ENCODE measurements at regions of chr6 and their contacts with region 1.

Region 1: GRCh38 chr6:30541515-30542403 is 14.5 kb downstream of the GNL1 start:
- DNase-seq: peak; percentile 90
- ATAC-seq: peak; percentile 76
- H3K4me3 Mint-ChIP-seq: peak overlapping the region; percentile 59
- H3K27ac Mint-ChIP-seq: peak overlapping the region; percentile 79
- H3K4me1 Mint-ChIP-seq: peaks cover 40% of the 10 kb centered on the region
- H3K27me3 Mint-ChIP-seq: no peaks in the 10 kb centered on the region

Region 2: GRCh38 chr6:30394139-30394538 is 147.6 kb before region 1 on chr6:
- CTCF ChIA-PET with region 1: no interaction called
- POLR2A ChIA-PET with region 1: no interaction called
- intact Hi-C with region 1: no loop called
- DNase-seq: no peak
- ATAC-seq: no peak
- H3K4me3 Mint-ChIP-seq: no peak overlapping the region
- H3K27ac Mint-ChIP-seq: no peak overlapping the region
- H3K4me1 Mint-ChIP-seq: no peaks in the 10 kb centered on the region
- H3K27me3 Mint-ChIP-seq: peaks cover 48% of the 10 kb centered on the region

Region 3: DNA sequence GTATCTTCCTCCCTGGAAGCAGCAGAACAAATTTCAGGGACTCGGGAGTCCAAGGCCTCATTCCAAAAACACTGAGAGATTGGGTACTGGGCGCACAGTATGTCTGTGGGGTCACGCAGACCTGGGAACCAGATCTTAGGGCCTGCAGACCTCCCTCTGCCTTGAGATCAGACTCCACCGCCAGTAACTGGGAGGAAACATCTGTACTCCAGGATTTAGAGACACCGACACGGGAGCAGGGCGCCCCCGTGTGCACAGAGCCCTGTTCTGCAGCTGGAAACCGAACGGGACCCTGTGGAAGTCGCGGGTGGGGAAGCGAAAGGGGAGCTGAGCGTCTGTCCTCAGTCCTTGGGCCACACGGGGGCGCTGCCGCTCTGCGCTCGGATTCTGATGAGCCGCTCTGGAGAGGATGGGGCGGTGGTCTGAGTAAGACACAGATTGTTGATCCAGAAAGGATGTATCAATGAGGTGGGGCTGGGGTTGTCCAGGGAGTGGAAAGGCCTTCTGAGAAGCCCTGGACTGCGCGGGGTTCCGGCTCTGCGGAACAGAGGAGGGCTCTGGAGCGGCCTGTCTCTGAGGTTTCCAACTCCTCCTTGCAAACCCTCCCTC is 88.1 kb before region 1 on chr6:
- CTCF ChIA-PET with region 1: interaction called, 19 read pairs
- POLR2A ChIA-PET with region 1: no interaction called
- intact Hi-C with region 1: no loop called
- DNase-seq: peak; percentile 93
- ATAC-seq: peak; percentile 85
- H3K4me3 Mint-ChIP-seq: peak overlapping the region; percentile 55
- H3K27ac Mint-ChIP-seq: no peak overlapping the region
- H3K4me1 Mint-ChIP-seq: peaks cover 37% of the 10 kb centered on the region
- H3K27me3 Mint-ChIP-seq: peaks cover 83% of the 10 kb centered on the region

Region 4: GRCh38 chr6:30483677-30484279 is 58.0 kb before region 1 on chr6:
- CTCF ChIA-PET with region 1: interaction called, 386 read pairs
- POLR2A ChIA-PET with region 1: interaction called, 8 read pairs
- intact Hi-C with region 1: loop called (anchors 1 kb)
- DNase-seq: no peak
- ATAC-seq: no peak
- H3K4me3 Mint-ChIP-seq: no peak overlapping the region
- H3K27ac Mint-ChIP-seq: no peak overlapping the region
- H3K4me1 Mint-ChIP-seq: peaks cover 39% of the 10 kb centered on the region
- H3K27me3 Mint-ChIP-seq: peaks cover 28% of the 10 kb centered on the region

Region 5: DNA sequence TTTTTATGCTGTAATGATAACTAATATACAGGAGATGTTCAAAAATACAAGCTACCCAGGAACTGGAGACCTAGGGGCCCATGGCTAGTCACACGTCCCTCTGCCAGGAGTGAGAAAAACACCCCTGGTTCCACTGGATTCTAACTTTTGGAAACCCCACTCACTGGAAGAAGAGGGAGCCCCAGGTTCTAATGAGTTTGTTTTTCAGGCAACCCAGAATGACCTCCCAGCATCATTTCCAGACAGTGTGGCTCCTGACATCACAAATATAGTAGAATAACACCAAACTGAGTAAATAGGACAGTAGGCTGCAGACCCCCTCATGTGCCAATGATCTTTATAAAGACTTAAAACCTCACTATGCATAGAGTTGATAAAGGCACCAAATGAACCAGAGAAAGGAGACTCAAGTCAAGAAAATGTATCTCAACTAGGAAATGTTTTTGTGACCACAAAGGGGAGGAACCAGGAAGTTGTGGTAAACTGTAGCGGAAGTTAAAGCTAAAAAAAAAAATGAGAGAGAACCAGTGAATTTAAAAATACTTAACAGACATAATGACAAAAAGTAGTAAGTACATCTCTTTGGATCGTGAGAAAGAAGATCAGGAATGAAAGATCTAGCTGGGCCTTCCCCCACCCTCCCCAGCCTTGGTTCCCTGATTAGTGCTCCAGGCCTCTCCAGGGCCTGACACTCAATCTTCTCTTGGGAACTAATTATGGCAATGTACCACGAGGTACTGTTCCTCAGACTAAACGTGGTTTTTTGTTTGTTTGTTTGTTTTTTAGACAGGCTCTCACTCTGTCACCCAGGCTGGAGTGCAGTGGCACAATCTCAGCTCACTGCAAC is 32.6 kb before region 1 on chr6:
- CTCF ChIA-PET with region 1: interaction called, 89 read pairs
- POLR2A ChIA-PET with region 1: no interaction called
- intact Hi-C with region 1: no loop called
- DNase-seq: peak; percentile 37
- ATAC-seq: peak; percentile 71
- H3K4me3 Mint-ChIP-seq: peak overlapping the region; percentile 51
- H3K27ac Mint-ChIP-seq: peak overlapping the region; percentile 94
- H3K4me1 Mint-ChIP-seq: peaks cover 60% of the 10 kb centered on the region
- H3K27me3 Mint-ChIP-seq: no peaks in the 10 kb centered on the region

Region 6: DNA sequence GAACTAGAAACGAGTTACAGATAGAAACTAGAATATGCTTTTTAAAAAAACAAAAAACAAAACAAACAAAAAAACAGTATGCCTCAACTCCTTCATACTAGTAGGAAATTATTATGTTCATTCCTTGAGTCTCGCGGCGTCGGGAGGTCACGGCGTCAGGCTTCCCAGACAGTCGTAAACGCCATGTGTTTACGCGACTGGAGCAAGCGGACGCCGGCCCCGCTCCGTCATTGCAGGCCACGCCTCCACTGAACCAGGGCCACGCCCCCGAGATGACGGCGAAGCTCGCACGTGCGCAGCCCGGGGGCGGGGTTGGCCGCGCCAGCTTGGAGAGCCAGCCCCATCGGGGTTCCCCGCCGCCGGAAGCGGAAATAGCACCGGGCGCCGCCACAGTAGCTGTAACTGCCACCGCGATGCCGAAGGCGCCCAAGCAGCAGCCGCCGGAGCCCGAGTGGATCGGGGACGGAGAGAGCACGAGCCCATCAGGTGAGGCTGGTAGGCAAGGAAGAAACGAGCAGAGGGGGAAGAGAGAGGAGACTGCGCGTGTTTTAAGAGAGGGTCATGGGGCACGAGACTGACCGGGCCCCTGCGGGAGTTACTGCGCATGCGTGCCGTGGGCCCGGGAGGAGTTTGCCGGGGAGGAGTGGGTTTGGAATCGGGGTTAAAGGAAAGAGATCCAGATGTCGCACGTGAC is 29.5 kb after region 1 on chr6 and contains the start of gene ABCF1:
- CTCF ChIA-PET with region 1: interaction called, 14 read pairs
- POLR2A ChIA-PET with region 1: no interaction called
- intact Hi-C with region 1: no loop called
- DNase-seq: peak; percentile 100
- ATAC-seq: peak; percentile 86
- H3K4me3 Mint-ChIP-seq: peak within 1 kb of the TSS; percentile 94
- H3K27ac Mint-ChIP-seq: peak within 1 kb of the TSS; percentile 100
- H3K4me1 Mint-ChIP-seq: peaks cover 62% of the 10 kb centered on the region
- H3K27me3 Mint-ChIP-seq: no peaks in the 10 kb centered on the region
- total RNA-seq, gene ABCF1: 100.0 to 105 TPM

Region 7: DNA sequence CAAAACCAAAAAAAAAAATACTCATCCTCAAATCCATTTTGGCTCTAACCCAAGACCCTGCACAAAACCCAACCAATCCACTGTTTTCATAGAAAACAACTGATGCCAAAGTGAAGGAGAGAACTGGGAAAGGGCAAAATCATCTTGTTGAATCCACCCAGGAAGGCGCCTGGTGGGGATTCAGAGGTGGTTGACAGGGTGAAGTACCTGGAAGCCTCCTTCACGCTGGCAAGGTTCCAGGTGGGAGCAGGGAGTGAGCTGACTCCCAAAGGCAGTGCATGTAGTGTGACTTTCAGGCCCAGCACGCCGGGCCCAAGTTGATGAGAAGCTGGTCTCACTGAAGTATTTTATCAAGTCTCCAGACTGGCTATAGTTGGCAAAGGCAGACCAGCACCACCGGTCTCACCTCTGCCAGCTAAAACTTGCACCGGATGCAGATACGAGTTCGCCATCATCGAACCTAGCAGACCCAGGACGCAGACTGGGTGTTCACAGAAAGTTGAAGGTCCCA is 58.7 kb after region 1 on chr6:
- CTCF ChIA-PET with region 1: interaction called, 71 read pairs
- POLR2A ChIA-PET with region 1: no interaction called
- intact Hi-C with region 1: loop called (anchors 2 kb)
- DNase-seq: no peak
- ATAC-seq: no peak
- H3K4me3 Mint-ChIP-seq: no peak overlapping the region
- H3K27ac Mint-ChIP-seq: no peak overlapping the region
- H3K4me1 Mint-ChIP-seq: peaks cover 17% of the 10 kb centered on the region
- H3K27me3 Mint-ChIP-seq: no peaks in the 10 kb centered on the region